ENCODE measurements at regions of chr6 and their contacts with region 1.

Region 1: DNA sequence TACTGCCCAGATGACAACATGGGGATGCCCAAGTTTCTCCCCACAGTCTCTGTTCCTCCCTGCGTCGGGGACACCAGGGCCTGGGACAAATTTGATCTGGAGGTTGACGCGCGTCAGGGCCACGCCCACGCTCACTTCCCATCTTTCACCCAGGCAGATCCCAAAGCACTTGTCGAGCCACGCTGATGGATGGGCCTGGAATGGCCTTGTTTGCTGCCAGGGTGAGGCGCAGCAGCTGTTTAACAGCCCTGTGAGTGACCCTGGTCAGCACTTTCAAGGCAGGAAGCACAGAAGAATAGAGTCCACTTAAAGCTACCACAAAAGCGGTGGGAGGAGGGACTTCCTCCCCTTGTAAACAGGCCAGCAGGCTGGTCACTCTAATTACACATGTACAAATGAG is 324.7 kb upstream of the JARID2 start:
- DNase-seq: peak; percentile 88 to 96 (median 93)
- H3K4me3 ChIP-seq: peak overlapping the region in 1 of 3 experiments; percentile 26
- H3K4me3 Mint-ChIP-seq: peak overlapping the region; percentile 55 to 67
- H3K27ac ChIP-seq: peak overlapping the region; percentile 99 to 100
- H3K27ac Mint-ChIP-seq: peak overlapping the region; percentile 99 to 100 (median 100)
- H3K4me1 ChIP-seq: peaks cover 82 to 87% of the 10 kb centered on the region in 2 donors
- H3K4me1 Mint-ChIP-seq: peaks cover 90% of the 10 kb centered on the region
- H3K27me3 ChIP-seq: no peaks in the 10 kb centered on the region
- H3K27me3 Mint-ChIP-seq: peaks cover 0 to 2% (median 1%) of the 10 kb centered on the region in 3 donors
- CTCF ChIP-seq: no peak

Region 2: GRCh38 chr6:14210663-14211561 is 710.3 kb before region 1 on chr6:
- intact Hi-C with region 1: loop called in 1 of 2 experiments (anchors 5 kb)
- DNase-seq: peak; percentile 81 to 92 (median 92)
- H3K4me3 ChIP-seq: peak overlapping the region; percentile 65 to 80 (median 72)
- H3K4me3 Mint-ChIP-seq: peak overlapping the region; percentile 85 to 92
- H3K27ac ChIP-seq: peak overlapping the region; percentile 65 to 89
- H3K27ac Mint-ChIP-seq: peak overlapping the region; percentile 88 to 97 (median 92)
- H3K4me1 ChIP-seq: peaks cover 21 to 25% of the 10 kb centered on the region in 2 donors
- H3K4me1 Mint-ChIP-seq: peaks cover 21% of the 10 kb centered on the region
- H3K27me3 ChIP-seq: no peaks in the 10 kb centered on the region
- H3K27me3 Mint-ChIP-seq: peaks cover 2 to 5% (median 3%) of the 10 kb centered on the region in 3 donors
- CTCF ChIP-seq: peak; percentile 64

Region 3: GRCh38 chr6:14734416-14735340 is 186.5 kb before region 1 on chr6:
- intact Hi-C with region 1: loop called in 1 of 2 experiments (anchors 2 kb)
- DNase-seq: peak; percentile 95 to 99 (median 99)
- H3K4me3 ChIP-seq: no peak overlapping the region
- H3K4me3 Mint-ChIP-seq: peak overlapping the region; percentile 30 to 62
- H3K27ac ChIP-seq: peak overlapping the region; percentile 60 to 99
- H3K27ac Mint-ChIP-seq: peak overlapping the region; percentile 95 to 100 (median 99)
- H3K4me1 ChIP-seq: peaks cover 60 to 63% of the 10 kb centered on the region in 2 donors
- H3K4me1 Mint-ChIP-seq: peaks cover 89% of the 10 kb centered on the region
- H3K27me3 ChIP-seq: no peaks in the 10 kb centered on the region
- H3K27me3 Mint-ChIP-seq: no peaks in the 10 kb centered on the region
- CTCF ChIP-seq: no peak

Region 4: DNA sequence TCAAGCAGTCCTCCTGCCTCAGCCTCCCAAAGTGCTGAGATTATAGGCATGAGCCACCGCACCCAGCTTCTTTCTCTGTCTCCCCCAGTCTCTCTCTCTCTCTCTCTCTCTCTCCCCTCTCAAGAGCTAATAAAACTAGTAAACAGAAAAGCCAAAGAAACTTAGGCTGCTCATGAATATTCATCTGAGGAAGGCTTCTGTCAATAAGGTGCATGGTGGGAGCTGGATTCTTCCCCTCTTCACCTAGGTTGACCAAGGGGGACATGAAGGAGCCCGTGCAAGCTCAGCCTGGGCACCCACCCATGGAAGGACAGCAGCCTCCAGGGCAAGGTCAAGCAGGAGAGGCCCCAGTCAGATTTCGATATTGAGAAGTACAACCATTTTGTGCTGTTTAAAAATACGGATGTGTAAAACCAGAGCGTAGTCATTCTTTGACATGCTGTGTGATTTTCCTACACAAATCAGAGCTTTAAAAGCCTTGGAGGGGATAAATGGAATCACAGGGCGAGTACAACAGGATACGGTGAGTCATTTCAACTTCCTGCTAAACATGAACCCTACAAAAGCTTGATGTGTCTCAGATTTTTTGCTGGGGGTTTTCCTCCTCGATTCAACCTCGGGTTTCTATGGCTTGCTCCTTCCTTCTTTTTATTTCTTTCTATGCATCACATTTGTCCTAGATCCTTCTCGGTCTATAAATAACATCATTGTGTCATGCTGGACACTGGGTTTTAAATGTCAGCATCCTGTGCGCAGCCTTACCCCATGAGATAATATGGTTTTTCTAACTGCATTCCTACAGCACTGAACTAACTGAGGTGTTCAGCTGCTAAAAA is 44.2 kb before region 1 on chr6:
- intact Hi-C with region 1: loop called in 1 of 2 experiments (anchors 5 kb)
- DNase-seq: peak; percentile 95 to 99 (median 99)
- H3K4me3 ChIP-seq: no peak overlapping the region
- H3K4me3 Mint-ChIP-seq: peak overlapping the region in 1 of 2 donors; percentile 67
- H3K27ac ChIP-seq: peak overlapping the region; percentile 95 to 99
- H3K27ac Mint-ChIP-seq: peak overlapping the region; percentile 99 to 100 (median 100)
- H3K4me1 ChIP-seq: peaks cover 86 to 90% of the 10 kb centered on the region in 2 donors
- H3K4me1 Mint-ChIP-seq: peaks cover 95% of the 10 kb centered on the region
- H3K27me3 ChIP-seq: no peaks in the 10 kb centered on the region
- H3K27me3 Mint-ChIP-seq: peaks cover 0 to 2% (median 0%) of the 10 kb centered on the region in 3 donors
- CTCF ChIP-seq: no peak

Region 5: DNA sequence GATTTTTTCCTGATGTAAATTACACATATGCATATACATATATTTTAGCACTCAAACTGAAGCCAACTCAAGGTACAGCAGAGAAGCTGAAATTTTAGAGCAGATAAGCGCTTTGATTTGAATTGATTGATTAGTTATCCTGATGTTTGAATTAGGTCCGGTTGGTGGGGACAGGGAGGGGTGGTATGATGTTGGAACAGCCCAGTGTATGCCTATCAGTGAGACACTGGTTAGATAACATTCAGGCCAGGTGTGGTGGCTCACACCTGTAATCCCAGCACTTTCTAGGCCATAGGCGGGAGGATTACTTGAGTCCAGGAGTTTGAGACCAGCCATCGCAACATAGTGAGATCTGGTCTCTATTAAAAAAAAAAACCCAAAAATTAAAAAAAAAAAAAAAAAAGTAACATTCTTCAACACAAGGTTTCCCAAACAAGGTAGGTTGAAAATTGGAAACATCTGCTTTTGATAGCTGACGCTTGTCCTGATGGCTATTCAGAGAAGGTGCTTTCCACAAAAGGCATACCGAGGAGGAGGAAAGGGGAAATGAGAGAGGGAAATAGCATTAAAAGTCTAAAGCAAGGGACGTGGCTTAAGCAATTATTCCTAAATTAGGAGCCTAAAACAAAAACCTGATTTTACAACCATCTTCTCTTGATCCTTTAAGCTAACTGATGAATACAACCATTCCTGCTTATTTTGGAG is 36.3 kb after region 1 on chr6:
- intact Hi-C with region 1: loop called (anchors 5 kb)
- DNase-seq: peak; percentile 60 to 87 (median 75)
- H3K4me3 ChIP-seq: no peak overlapping the region
- H3K4me3 Mint-ChIP-seq: peak overlapping the region in 1 of 2 donors; percentile 48
- H3K27ac ChIP-seq: peak overlapping the region in 1 of 2 donors; percentile 73
- H3K27ac Mint-ChIP-seq: peak overlapping the region in 6 of 7 donors; percentile 70 to 87 (median 80)
- H3K4me1 ChIP-seq: peaks cover 40% of the 10 kb centered on the region in 2 donors
- H3K4me1 Mint-ChIP-seq: peaks cover 39% of the 10 kb centered on the region
- H3K27me3 ChIP-seq: no peaks in the 10 kb centered on the region
- H3K27me3 Mint-ChIP-seq: peaks cover 0 to 2% (median 0%) of the 10 kb centered on the region in 3 donors
- CTCF ChIP-seq: no peak

Region 6: GRCh38 chr6:15062516-15063252 is 141.5 kb after region 1 on chr6:
- intact Hi-C with region 1: loop called in 1 of 2 experiments (anchors 5 kb)
- DNase-seq: peak; percentile 92 to 96 (median 94)
- H3K4me3 ChIP-seq: no peak overlapping the region
- H3K4me3 Mint-ChIP-seq: no peak overlapping the region
- H3K27ac ChIP-seq: peak overlapping the region; percentile 76 to 98
- H3K27ac Mint-ChIP-seq: peak overlapping the region; percentile 91 to 99 (median 97)
- H3K4me1 ChIP-seq: peaks cover 65 to 70% of the 10 kb centered on the region in 2 donors
- H3K4me1 Mint-ChIP-seq: peaks cover 60% of the 10 kb centered on the region
- H3K27me3 ChIP-seq: no peaks in the 10 kb centered on the region
- H3K27me3 Mint-ChIP-seq: peaks cover 0 to 9% (median 0%) of the 10 kb centered on the region in 3 donors
- CTCF ChIP-seq: no peak

Region 7: GRCh38 chr6:15245361-15246216 is 324.4 kb after region 1 on chr6 and contains the start of gene JARID2:
- intact Hi-C with region 1: loop called in 1 of 2 experiments (anchors 5 kb)
- DNase-seq: peak; percentile 97 to 98 (median 98)
- H3K4me3 ChIP-seq: peak within 1 kb of the TSS; percentile 90 to 100 (median 98)
- H3K4me3 Mint-ChIP-seq: peak within 1 kb of the TSS; percentile 99 to 100
- H3K27ac ChIP-seq: peak within 1 kb of the TSS; percentile 71 to 90
- H3K27ac Mint-ChIP-seq: peak within 1 kb of the TSS; percentile 96 to 99 (median 98)
- H3K4me1 ChIP-seq: peaks cover 33 to 44% of the 10 kb centered on the region in 2 donors
- H3K4me1 Mint-ChIP-seq: peaks cover 25% of the 10 kb centered on the region
- H3K27me3 ChIP-seq: no peaks in the 10 kb centered on the region
- H3K27me3 Mint-ChIP-seq: no peaks in the 10 kb centered on the region
- CTCF ChIP-seq: no peak
- polyA plus RNA-seq, gene JARID2: 6.8 to 17.5 (median 12.5) TPM